A549 (cell line): ENCODE measurements at regions of chr17 and their contacts with region 1.

Region 1: DNA sequence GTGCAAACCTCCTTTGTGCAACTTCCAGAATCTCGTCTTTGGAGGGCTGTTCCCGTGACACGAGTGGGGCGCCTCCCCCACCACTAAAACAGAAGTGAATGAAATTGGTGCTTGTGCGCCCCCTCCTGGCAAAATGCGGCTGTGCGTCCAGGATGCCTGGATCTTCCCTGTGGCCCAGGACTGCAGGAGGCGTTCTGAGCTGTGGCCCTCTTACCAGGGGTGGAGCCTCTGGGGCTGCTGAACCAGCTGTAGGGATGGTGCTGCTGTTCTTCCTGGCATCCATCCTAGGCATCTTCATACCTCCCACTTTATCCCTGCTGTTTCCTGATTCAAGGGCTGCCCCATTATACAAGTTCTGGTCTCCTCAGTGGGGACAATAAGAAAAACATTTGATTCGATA is 18.5 kb upstream of the NAGLU start:
- DNase-seq: peak; percentile 92 to 100
- ATAC-seq: peak; percentile 73 to 85
- H3K4me3 ChIP-seq: no peak overlapping the region
- H3K27ac ChIP-seq: peak overlapping the region; percentile 95 to 98
- H3K4me1 ChIP-seq: peaks cover 59% of the 10 kb centered on the region
- CTCF ChIP-seq: peak; percentile 99
- EP300 ChIP-seq: no peak
- POLR2A ChIP-seq: no peak
- RAD21 ChIP-seq: peak; percentile 96

Region 2: DNA sequence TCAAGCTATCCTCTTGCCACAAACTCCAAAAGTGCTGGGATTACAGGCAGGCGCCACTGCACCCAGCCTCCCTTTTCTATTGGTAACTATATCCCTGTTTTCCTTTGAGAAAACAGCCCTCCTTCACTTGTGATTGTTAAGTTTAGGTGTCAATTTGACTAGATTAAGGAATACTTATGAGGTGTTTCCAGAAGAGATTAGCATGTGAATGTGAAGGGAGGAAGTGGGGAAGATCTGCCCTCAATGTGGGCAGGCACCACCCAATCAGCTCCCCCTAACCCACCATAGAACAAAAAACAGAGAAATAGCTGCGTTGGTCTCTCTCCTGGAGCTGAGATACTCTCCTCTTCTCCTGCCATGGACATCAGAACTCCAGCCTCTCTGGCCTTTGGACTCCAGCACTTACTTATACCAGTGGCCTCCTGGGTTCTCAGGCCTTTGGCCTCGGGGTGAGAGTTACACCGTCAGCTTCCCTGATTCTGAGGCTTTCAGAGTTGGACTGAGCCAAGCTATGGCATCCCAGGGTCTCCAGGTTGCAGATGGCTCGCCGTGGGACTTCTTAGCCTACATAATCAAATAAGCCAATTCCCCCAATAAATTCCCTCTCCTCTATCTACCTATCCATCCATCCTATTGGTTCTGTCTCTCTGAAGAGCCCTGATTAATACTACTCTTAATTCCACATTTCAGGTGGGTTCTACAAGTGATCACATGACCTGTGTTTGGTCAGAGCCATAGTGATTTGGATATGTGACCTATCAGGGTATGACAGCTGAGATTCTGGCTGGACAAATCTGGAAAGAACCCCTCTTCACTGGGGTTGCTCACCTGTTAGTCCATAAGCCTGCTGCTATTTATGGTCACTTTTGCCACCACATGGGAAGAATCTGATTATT is 117.3 kb before region 1 on chr17:
- CTCF ChIA-PET with region 1: interaction called, 115 read pairs
- POLR2A ChIA-PET with region 1: no interaction called
- DNase-seq: no peak
- ATAC-seq: no peak; a peak in 1 of 6 replicates
- H3K4me3 ChIP-seq: no peak overlapping the region
- H3K27ac ChIP-seq: peak overlapping the region; percentile 1 to 44; a peak in 3 of 6 replicates
- H3K4me1 ChIP-seq: peaks cover 51% of the 10 kb centered on the region
- CTCF ChIP-seq: no peak
- EP300 ChIP-seq: no peak
- POLR2A ChIP-seq: no peak
- RAD21 ChIP-seq: no peak

Region 3: GRCh38 chr17:42422958-42423712 is 94.4 kb before region 1 on chr17 and contains the start of gene CAVIN1:
- CTCF ChIA-PET with region 1: interaction called, 213 read pairs
- POLR2A ChIA-PET with region 1: interaction called, 66 read pairs
- DNase-seq: peak; percentile 97 to 99
- ATAC-seq: peak; percentile 71 to 86
- H3K4me3 ChIP-seq: peak within 1 kb of the TSS; percentile 93
- H3K27ac ChIP-seq: peak within 1 kb of the TSS; percentile 93 to 95
- H3K4me1 ChIP-seq: peaks cover 45% of the 10 kb centered on the region
- CTCF ChIP-seq: no peak
- EP300 ChIP-seq: no peak
- POLR2A ChIP-seq: peak; percentile 99
- RAD21 ChIP-seq: peak in 1 of 2 experiments; percentile 18; a peak in 1 of 5 replicates
- polyA plus RNA-seq, gene CAVIN1: 91.4 and 101 TPM in 2 replicates

Region 4: DNA sequence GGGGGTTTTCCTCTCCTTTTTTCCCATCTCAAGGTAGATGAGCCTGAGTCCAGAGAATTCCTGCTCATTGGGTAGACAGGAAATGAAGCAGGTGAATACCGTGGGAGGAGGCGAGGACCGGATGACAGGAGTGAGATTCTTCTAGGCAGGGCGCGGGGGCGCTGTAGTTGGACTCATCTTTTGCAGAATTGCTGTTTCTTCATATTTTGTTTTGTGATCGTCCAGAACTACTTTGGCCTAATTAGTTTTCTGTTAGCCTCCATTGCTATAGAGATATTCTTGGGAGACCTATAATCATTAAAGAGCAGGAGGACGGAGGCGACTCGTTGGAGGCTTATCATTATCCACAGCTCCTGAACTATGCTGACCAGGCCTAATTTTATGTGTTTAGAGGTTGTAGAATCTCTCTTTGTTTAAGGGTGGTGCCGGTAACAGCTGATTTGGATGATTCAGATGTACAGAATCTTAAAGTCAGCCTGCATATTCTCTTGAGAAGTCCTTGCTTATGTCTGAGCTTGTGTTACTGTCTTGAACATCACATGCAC is 58.2 kb before region 1 on chr17:
- CTCF ChIA-PET with region 1: interaction called, 25 read pairs
- POLR2A ChIA-PET with region 1: no interaction called
- DNase-seq: peak; percentile 68 to 74
- ATAC-seq: peak; percentile 77 to 79
- H3K4me3 ChIP-seq: peak overlapping the region; percentile 83
- H3K27ac ChIP-seq: peak overlapping the region; percentile 84 to 88
- H3K4me1 ChIP-seq: peaks cover 48% of the 10 kb centered on the region
- CTCF ChIP-seq: peak; percentile 79
- EP300 ChIP-seq: no peak
- POLR2A ChIP-seq: no peak
- RAD21 ChIP-seq: 0 out of 5 replicates have a peak, but pooled peaks of 1 of the 2 experiments have one; percentile 22

Region 5: GRCh38 chr17:42502091-42502490 is 15.4 kb before region 1 on chr17:
- CTCF ChIA-PET with region 1: interaction called, 64 read pairs
- POLR2A ChIA-PET with region 1: interaction called, 3 read pairs
- DNase-seq: no peak
- ATAC-seq: no peak
- H3K4me3 ChIP-seq: no peak overlapping the region
- H3K27ac ChIP-seq: no peak overlapping the region
- H3K4me1 ChIP-seq: no peaks in the 10 kb centered on the region
- CTCF ChIP-seq: no peak
- EP300 ChIP-seq: no peak
- POLR2A ChIP-seq: no peak
- RAD21 ChIP-seq: no peak

Region 6: DNA sequence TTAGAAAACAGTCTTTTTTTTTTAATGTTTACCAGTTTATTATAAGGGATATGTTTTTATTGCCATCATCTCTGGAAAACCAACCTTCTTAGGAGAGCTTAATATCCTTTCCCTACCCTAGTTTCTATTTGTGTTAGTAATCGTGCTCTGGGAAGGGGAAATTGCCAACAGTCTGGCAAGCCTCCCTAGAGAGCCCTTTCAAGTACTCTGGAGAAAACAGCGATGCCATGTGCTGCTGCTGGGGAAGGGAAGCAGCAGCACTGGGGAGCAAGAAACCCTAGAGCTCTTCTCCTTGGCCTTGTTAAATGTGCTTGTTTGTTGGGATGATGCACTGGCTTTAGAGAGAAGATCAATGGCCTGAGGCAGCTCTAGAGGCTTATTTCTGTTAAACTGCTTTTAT is 81.4 kb after region 1 on chr17:
- CTCF ChIA-PET with region 1: no interaction called
- POLR2A ChIA-PET with region 1: no interaction called
- DNase-seq: no peak
- ATAC-seq: no peak
- H3K4me3 ChIP-seq: no peak overlapping the region
- H3K27ac ChIP-seq: no peak overlapping the region
- H3K4me1 ChIP-seq: no peaks in the 10 kb centered on the region
- CTCF ChIP-seq: no peak
- EP300 ChIP-seq: no peak
- POLR2A ChIP-seq: no peak
- RAD21 ChIP-seq: no peak